ENCODE measurements at regions of chr4 and their contacts with region 1.

Region 1: GRCh38 chr4:183504064-183504929 is 561 bp upstream of the ING2 start:
- DNase-seq: peak; percentile 100
- H3K4me3 Mint-ChIP-seq: peak overlapping the region; percentile 90
- H3K27ac Mint-ChIP-seq: peak overlapping the region; percentile 95
- H3K4me1 Mint-ChIP-seq: peaks cover 25% of the 10 kb centered on the region
- H3K27me3 Mint-ChIP-seq: no peaks in the 10 kb centered on the region

Region 2: GRCh38 chr4:182917182-182918043 is 586.9 kb before region 1 on chr4 and contains the start of gene DCTD:
- intact Hi-C with region 1: loop called (anchors 2 kb)
- DNase-seq: peak; percentile 95
- H3K4me3 Mint-ChIP-seq: peak within 1 kb of the TSS; percentile 87
- H3K27ac Mint-ChIP-seq: peak within 1 kb of the TSS; percentile 93
- H3K4me1 Mint-ChIP-seq: peaks cover 44% of the 10 kb centered on the region
- H3K27me3 Mint-ChIP-seq: peaks cover 5% of the 10 kb centered on the region
- total RNA-seq, gene DCTD: 125 and 129 TPM in 2 replicates

Region 3: DNA sequence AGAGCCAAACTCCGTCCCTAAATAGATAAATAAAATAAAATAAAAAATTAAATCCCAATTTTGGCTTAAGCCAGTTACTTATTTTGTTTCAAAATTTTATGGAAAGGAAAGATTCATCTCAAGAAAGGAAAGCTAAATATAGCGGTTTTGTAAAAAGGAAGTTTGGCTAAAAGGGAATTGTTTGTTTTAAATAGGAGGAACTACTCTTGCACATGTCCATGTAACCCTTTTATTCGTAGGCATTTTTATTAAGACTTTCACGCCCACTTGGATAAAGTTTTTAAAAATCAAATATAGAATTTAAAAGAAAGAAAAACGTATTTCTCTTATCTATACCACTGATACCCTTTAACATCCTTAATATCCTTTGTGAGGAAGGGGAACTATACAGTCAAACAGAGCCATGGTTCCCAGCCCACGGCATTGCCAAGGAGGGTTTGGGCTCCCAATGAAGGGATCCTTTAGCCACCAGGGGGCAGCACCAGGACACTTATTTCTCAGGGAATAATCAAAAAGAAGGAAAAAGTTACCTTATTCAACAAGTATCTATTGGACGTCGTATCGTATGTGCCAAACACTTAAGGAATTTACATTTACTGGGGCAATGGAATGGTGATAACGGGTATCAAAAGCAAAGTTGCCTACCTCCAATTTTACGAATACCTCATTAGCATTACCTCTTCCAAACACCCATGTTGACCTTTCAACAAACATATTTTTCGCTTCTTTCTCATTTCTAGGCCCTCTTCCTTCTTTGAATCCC is 32.2 kb before region 1 on chr4:
- intact Hi-C with region 1: loop called (anchors 2 kb)
- DNase-seq: peak; percentile 93
- H3K4me3 Mint-ChIP-seq: no peak overlapping the region
- H3K27ac Mint-ChIP-seq: no peak overlapping the region
- H3K4me1 Mint-ChIP-seq: peaks cover 2% of the 10 kb centered on the region
- H3K27me3 Mint-ChIP-seq: no peaks in the 10 kb centered on the region

Region 4: DNA sequence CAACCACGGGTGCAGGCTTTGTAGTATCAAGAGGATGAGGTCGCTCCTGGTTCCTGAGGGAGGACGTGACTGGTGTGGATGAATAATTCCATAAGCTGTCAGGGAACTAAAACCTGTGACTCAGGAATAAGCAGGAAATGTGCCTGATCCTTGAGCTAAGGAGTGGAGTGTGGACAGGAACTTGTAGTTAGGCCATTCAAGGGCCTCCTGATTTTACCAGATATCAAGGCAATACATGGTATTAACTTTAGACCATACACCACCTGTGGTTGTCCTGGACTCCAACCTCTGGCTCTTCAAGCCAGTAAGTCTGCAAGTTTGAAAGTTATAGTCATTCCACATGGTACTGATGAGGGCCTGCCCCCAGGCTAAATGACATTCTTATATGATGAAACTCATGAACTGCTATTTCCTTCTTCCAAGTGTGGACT is 11.5 kb before region 1 on chr4:
- intact Hi-C with region 1: no loop called
- DNase-seq: no peak
- H3K4me3 Mint-ChIP-seq: no peak overlapping the region
- H3K27ac Mint-ChIP-seq: no peak overlapping the region
- H3K4me1 Mint-ChIP-seq: no peaks in the 10 kb centered on the region
- H3K27me3 Mint-ChIP-seq: no peaks in the 10 kb centered on the region

Region 5: DNA sequence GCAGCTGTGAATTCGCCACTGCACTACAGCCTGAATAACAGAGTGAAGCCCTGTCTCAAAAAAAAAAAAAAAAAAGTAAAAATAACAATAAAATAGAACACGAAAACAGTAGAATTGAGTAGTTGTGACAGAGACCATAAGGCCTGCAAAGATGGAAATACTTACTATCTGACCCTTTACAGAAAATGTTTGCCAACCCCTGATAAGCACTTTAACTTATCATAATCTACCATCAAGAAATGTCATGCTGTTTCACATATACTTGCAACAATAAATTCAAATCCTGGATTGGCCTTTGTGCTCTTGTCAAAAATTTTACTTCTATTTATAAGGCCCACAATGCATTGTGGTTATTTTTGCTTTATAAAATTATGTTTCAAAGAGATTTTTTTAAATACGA is 76.1 kb after region 1 on chr4:
- intact Hi-C with region 1: no loop called
- DNase-seq: no peak
- H3K4me3 Mint-ChIP-seq: no peak overlapping the region
- H3K27ac Mint-ChIP-seq: no peak overlapping the region
- H3K4me1 Mint-ChIP-seq: no peaks in the 10 kb centered on the region
- H3K27me3 Mint-ChIP-seq: no peaks in the 10 kb centered on the region

Region 6: GRCh38 chr4:184237612-184238011 is 733.3 kb after region 1 on chr4:
- intact Hi-C with region 1: loop called (anchors 5 kb)
- DNase-seq: peak; percentile 87
- H3K4me3 Mint-ChIP-seq: peak overlapping the region; percentile 68
- H3K27ac Mint-ChIP-seq: peak overlapping the region; percentile 94
- H3K4me1 Mint-ChIP-seq: peaks cover 51% of the 10 kb centered on the region
- H3K27me3 Mint-ChIP-seq: no peaks in the 10 kb centered on the region

Region 7: DNA sequence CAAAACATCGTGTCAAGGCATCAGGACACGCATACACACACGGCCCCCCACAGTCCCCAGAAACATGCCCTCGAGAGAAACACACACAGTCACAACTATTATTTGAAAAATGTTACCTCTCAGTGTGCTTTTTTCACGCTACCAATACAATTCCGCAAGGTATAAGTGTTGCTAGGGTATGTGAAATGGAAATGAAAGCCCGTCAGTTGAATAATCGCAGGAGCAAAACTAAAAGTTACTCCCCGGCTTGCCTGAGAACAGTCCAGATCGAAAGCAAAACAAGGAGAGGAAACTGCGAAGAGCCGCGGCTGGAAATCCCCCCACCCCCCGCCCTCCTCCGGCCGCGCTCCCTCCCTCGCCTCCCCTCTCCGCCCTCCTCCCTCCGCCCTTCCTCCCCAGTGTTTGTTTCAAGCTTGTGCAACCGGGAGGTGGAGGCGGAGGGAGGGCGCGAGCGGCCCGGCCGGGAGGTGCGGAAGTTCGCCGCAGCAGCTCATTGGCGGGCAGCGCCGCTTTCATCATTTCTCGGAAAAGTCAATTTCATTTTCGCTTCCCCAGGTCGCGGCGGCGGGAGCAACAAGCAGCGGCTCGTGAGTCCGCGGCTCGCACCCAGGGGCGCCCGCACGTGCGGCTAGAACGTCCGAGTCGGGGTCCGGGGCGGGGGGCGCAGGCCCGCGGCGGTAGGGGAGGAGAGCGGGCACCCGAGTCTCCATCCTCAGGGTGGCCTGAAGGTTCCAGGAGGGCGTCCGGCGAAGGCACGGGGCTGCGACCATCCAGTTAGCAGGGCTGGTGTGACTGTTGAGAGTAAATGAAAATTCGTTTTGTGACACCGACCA is 970.2 kb after region 1 on chr4 and contains the start of gene IRF2:
- intact Hi-C with region 1: loop called (anchors 5 kb)
- DNase-seq: peak; percentile 98
- H3K4me3 Mint-ChIP-seq: peak within 1 kb of the TSS; percentile 99
- H3K27ac Mint-ChIP-seq: peak within 1 kb of the TSS; percentile 98
- H3K4me1 Mint-ChIP-seq: peaks cover 52% of the 10 kb centered on the region
- H3K27me3 Mint-ChIP-seq: no peaks in the 10 kb centered on the region
- total RNA-seq, gene IRF2: 48.7 and 50.0 TPM in 2 replicates

Region 8: DNA sequence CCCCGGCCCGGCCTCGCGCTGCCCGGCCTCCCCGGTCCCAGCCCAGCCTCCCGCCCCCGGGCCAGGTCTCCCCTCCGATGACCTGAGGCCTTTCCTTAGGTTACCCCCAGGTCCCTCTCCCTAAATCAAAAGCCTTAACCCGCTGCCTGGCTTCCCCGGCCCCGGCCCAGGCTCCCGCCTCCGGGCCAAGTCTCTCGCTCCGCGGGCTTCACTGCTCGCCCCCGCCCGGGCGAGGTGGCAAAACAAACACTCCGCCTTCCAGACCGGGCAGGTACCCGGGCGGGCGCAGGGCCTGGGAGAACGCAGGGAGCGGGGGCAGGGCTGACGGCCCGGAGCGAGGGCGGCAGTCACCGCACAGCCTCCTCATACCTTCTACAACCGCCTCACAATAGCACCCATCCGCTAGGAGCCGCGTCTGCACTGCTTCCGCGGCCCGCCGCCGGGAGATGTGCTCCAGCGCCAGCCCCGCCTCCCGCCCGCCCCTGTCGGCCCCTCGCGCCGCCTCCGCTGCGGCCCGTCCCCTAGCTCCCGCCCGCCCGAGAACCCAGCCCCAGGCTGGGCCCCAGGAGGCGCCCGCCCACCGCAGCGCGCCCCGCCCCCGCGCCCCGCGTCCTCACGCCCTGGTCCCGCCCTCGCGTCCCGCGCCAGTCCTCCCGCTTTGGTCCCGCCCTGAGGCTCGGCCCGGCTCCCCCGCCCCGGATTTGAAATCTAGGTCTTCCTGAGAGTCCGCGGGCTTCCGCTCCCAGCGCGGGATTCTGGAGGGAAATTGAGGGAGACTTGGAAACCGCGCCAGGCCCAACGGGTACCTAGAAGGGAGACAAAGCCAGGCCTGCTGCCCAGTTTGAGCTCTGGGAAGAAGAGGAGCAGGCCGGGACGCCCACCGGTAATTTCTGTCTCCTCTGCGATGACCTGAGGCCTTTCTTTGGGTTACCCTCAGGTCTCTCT is 1145.0 kb after region 1 on chr4 and contains the starts of genes CASP3 and PRIMPOL:
- intact Hi-C with region 1: loop called (anchors 1 kb)
- DNase-seq: peak; percentile 99
- H3K4me3 Mint-ChIP-seq: peak within 1 kb of the TSS; percentile 99
- H3K27ac Mint-ChIP-seq: peak within 1 kb of the TSS; percentile 92
- H3K4me1 Mint-ChIP-seq: peaks cover 51% of the 10 kb centered on the region
- H3K27me3 Mint-ChIP-seq: no peaks in the 10 kb centered on the region
- total RNA-seq, gene CASP3: 84.8 and 89.8 TPM in 2 replicates
- total RNA-seq, gene PRIMPOL: 14.7 and 17.6 TPM in 2 replicates

Region 9: DNA sequence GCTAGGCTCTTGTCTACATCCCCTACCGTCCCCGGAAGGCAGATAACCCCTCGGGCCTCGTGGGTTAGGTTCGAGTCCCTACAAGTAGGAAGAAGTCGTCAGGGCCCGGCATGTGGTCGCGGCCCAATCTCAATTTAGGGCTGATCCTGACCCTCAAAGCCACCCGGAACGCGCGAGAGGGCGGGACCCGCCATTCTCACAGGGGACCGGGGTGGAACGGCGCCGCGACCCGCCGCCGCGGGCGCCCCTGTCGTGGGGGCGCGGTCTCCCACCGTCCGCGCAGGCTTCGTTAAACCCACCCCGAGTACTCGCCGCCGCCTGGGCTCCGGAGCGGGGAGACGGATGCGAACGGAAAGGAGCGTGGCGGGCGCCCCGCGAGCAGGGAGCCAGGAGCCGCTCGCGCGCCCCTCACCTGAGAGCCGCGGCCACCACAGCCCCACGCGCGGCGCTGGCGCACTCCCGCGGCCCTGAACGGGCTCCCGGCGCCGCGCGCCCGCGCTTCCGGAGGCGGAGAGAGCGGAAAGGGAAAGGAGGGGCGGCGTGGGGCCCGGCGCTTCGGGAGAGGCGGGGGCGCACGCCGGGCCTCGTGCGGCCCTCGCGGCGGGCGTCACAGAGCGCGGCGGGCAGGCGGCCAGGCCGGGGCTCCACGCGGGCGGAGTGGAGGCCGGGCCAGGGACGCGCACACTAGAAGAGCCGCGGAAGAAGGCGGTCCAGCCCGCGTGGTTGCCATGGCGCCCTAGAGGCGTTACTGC is 1699.4 kb after region 1 on chr4 and contains the start of gene CFAP97:
- intact Hi-C with region 1: loop called (anchors 5 kb)
- DNase-seq: peak; percentile 95
- H3K4me3 Mint-ChIP-seq: peak within 1 kb of the TSS; percentile 97
- H3K27ac Mint-ChIP-seq: peak within 1 kb of the TSS; percentile 99
- H3K4me1 Mint-ChIP-seq: peaks cover 36% of the 10 kb centered on the region
- H3K27me3 Mint-ChIP-seq: no peaks in the 10 kb centered on the region
- total RNA-seq, gene CFAP97: 56.6 and 59.3 TPM in 2 replicates

Measured in activated CD4-positive, alpha-beta T cell treated with anti-CD3 and anti-CD28 coated beads, Interleukin-2, amount 10 ng/mL, durations not matched to agents 24 days and 14 days (primary cell).